Posterior vena cava (tissue), 2 donors: ENCODE measurements at regions of chr20 and their contacts with region 1.

Region 1: GRCh38 chr20:39874049-39874888 is 814.8 kb downstream of the MAFB start:
- DNase-seq: peak; percentile 87

Region 2: DNA sequence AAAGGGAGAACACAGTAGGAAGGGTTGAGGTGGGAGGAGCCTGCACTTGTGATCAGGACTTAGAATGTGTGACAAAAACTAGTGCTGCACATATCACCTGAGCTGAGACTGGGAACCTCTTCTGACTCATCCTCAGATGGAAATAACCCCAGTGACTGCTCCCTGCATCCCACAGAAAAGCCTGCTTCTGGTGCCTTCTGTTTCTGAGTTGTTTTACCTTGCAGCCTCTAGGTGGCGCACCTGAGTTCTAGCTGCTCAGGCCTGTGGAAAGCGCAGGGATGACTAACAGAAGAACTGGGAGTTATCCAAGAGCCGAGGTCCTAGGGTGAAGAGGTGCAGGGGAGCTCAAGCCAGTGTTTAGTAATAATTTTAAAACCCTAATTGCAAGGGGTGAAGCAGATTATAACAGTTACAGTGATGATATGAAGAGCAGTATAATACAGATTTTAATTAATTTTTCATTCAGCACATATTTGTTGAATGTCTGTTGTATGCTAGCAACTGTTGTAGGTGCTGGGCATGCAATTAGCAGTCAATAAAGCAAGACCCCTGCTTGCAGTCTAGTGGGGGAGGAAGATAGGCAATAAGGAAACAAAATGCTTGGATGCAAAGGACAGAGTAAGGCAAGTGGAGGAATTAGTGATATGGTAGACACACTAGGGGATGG is 609.6 kb before region 1 on chr20:
- intact Hi-C with region 1: loop called in 1 of 2 experiments (anchors 10 kb)
- DNase-seq: peak; percentile 85

Region 3: GRCh38 chr20:39825950-39826349 is 48.3 kb before region 1 on chr20:
- intact Hi-C with region 1: loop called in 1 of 2 experiments (anchors 2 kb)
- DNase-seq: no peak